WTC11 (cell line): ENCODE measurements at regions of chr9 and their contacts with region 1.

Region 1: DNA sequence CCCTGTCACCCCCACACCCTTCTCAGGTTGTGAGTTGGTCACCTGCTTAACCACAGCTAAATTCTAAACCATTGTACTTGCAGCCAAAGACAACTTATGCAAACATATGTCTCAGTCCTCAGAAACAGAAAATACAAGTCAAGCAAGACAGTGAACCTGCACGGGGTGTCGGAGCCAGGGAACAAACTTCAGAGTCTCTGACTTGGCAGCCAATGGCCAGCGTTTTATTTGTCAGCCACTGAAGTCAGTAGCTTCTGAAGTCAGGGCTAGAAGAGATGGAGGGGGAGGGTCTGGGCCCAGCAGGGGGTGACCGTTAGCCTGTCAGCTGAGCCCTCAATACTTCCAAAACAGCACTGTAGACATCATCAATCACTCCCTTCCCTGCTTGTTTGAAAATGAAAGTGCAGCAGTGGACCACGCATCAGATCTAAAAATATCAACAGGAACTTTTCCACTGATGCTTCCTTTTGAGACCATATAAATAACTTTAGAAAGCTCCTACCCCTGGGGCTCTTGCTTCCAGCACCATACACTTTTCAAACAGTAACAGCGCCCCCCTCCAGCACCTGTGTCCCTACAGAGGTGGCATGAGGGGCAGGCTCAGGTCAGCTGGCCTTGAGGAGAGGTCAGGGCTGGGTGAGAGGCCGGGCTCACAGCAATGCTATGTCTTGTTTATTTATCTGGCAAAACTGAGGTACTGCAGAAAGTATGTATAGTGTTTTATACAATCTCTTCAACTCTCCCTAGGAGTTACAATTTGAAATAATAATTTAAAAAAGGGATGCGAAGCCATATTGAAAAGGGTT is 142.5 kb downstream of the ACER2 start:
- DNase-seq: peak; percentile 46
- ATAC-seq: peak; percentile 93
- H3K4me3 Mint-ChIP-seq: no peak overlapping the region
- H3K27ac Mint-ChIP-seq: no peak overlapping the region
- H3K4me1 Mint-ChIP-seq: peaks cover 11% of the 10 kb centered on the region
- H3K27me3 Mint-ChIP-seq: no peaks in the 10 kb centered on the region; the same call in 1 of the 2 replicates
- CTCF ChIP-seq: 0 out of 2 replicates have a peak, but pooled peaks have one; percentile 10

Region 2: GRCh38 chr9:19456996-19457692 is 94.2 kb before region 1 on chr9:
- CTCF ChIA-PET with region 1: no interaction called
- POLR2A ChIA-PET with region 1: no interaction called
- DNase-seq: peak; percentile 69
- ATAC-seq: peak; percentile 93
- H3K4me3 Mint-ChIP-seq: no peak overlapping the region
- H3K27ac Mint-ChIP-seq: peak overlapping the region; percentile 44; the same call in 1 of the 2 replicates
- H3K4me1 Mint-ChIP-seq: peaks cover 31% of the 10 kb centered on the region
- H3K27me3 Mint-ChIP-seq: no peaks in the 10 kb centered on the region
- CTCF ChIP-seq: peak; percentile 90

Region 3: GRCh38 chr9:19517202-19517942 is 34.0 kb before region 1 on chr9:
- CTCF ChIA-PET with region 1: interaction called, 13 read pairs
- POLR2A ChIA-PET with region 1: no interaction called
- DNase-seq: peak; percentile 78
- ATAC-seq: peak; percentile 94
- H3K4me3 Mint-ChIP-seq: no peak overlapping the region
- H3K27ac Mint-ChIP-seq: no peak overlapping the region
- H3K4me1 Mint-ChIP-seq: peaks cover 13% of the 10 kb centered on the region
- H3K27me3 Mint-ChIP-seq: no peaks in the 10 kb centered on the region
- CTCF ChIP-seq: peak; percentile 49

Region 4: DNA sequence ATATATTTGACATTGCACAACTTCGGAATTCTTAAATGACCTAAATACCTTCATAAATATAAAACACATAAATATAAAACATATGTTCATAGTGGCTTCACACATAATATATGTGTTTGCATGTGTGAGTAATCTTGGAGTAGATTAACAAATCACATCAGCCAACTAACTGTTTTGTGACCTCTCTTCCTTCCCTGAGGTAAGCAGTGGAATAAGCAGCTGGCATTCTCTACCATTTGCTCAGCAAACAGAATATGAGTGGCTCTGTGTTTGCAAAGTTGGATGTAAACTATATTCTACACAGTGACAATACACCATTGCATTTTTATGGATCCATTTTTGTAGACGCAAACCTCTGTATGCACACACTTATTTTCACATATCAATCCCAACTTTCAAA is 47.4 kb after region 1 on chr9:
- CTCF ChIA-PET with region 1: no interaction called
- POLR2A ChIA-PET with region 1: no interaction called
- DNase-seq: no peak
- ATAC-seq: no peak
- H3K4me3 Mint-ChIP-seq: no peak overlapping the region
- H3K27ac Mint-ChIP-seq: no peak overlapping the region
- H3K4me1 Mint-ChIP-seq: 0 out of 2 replicates have a peak, but pooled peaks cover 4% of the 10 kb centered on the region
- H3K27me3 Mint-ChIP-seq: no peaks in the 10 kb centered on the region
- CTCF ChIP-seq: no peak